ENCODE measurements at regions of chr3 and their contacts with region 1.

Region 1: GRCh38 chr3:60010781-60011180 is 961.0 kb upstream of the CFAP20DC start:
- DNase-seq: peak; percentile 75
- H3K4me3 Mint-ChIP-seq: peak overlapping the region; percentile 60
- H3K27ac Mint-ChIP-seq: peak overlapping the region; percentile 85
- H3K4me1 Mint-ChIP-seq: peaks cover 77% of the 10 kb centered on the region
- H3K27me3 Mint-ChIP-seq: no peaks in the 10 kb centered on the region

Region 2: DNA sequence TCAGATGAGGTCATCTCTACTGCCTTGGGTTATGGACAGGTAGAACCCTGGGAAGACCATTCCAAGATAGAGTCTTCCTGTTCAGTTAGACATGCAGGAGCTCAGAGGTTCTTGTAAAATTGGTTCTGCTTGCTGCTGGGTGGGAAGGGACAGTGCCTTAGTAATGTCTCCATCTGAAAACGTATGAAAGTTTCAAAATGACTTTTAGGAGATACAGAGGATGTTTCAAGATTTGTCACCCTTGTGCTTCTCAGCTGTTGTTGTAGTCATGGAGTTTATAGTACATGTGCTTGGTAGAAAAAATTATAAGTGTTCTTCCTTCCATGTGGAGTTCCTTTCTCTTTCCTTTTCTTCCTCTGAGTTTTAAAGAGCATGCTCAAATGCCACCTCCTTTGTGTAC is 75.8 kb before region 1 on chr3:
- CTCF ChIA-PET with region 1: no interaction called
- POLR2A ChIA-PET with region 1: interaction called, 4 read pairs
- intact Hi-C with region 1: loop called (anchors 1 kb)
- DNase-seq: peak; percentile 29
- H3K4me3 Mint-ChIP-seq: peak overlapping the region; percentile 8
- H3K27ac Mint-ChIP-seq: peak overlapping the region; percentile 74
- H3K4me1 Mint-ChIP-seq: peaks cover 53% of the 10 kb centered on the region
- H3K27me3 Mint-ChIP-seq: no peaks in the 10 kb centered on the region

Region 3: GRCh38 chr3:60053526-60054265 is 42.9 kb after region 1 on chr3:
- CTCF ChIA-PET with region 1: no interaction called
- POLR2A ChIA-PET with region 1: interaction called, 3 read pairs
- intact Hi-C with region 1: loop called (anchors 1 kb)
- DNase-seq: peak; percentile 67
- H3K4me3 Mint-ChIP-seq: no peak overlapping the region
- H3K27ac Mint-ChIP-seq: peak overlapping the region; percentile 83
- H3K4me1 Mint-ChIP-seq: peaks cover 79% of the 10 kb centered on the region
- H3K27me3 Mint-ChIP-seq: no peaks in the 10 kb centered on the region

Region 4: DNA sequence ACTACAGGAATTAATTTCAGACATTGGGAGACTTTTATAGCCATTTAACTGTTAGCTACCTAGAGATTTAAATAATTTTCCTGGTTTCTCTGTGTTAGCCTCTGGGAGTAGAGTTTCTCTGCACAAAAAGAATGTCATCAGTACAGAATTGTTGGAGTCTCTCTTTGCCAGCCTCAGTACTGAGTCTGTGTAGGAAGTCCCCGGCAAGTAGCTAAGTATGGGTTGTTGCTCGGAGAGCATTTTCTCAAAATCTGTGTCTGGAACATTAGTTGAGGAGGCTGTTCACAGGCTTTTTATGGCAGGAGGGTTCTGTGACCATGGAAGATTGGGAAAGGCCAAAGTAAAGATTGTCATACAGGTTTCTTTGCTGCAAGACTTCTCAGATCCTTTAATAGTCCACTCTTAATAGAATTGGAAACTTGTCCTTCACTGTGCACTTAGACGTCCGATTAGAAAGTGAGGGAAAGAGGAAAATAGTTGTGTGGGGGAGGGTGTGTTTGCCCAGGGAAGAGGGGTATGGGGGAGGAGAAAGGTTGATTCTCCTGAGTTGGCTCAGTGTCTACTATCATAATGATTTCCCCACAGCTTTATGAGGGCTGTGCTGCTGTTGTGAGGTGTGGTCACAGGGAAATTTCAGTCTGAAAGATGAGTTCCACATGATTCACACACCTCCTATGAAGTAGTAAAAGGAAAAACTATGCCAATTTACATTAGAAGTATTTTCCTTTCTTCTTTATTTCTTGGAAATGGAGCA is 1757.7 kb after region 1 on chr3:
- CTCF ChIA-PET with region 1: no interaction called
- POLR2A ChIA-PET with region 1: no interaction called
- intact Hi-C with region 1: no loop called
- DNase-seq: no peak
- H3K4me3 Mint-ChIP-seq: no peak overlapping the region
- H3K27ac Mint-ChIP-seq: no peak overlapping the region
- H3K4me1 Mint-ChIP-seq: no peaks in the 10 kb centered on the region
- H3K27me3 Mint-ChIP-seq: no peaks in the 10 kb centered on the region

Measured in activated CD4-positive, alpha-beta memory T cell treated with anti-CD3 and anti-CD28 coated beads for 36 hours (primary cell).